Activated B cell treated with CpG ODN at 0.5 μM for 24 hours (primary cell): ENCODE measurements at regions of chr20 and their contacts with region 1.

Region 1: DNA sequence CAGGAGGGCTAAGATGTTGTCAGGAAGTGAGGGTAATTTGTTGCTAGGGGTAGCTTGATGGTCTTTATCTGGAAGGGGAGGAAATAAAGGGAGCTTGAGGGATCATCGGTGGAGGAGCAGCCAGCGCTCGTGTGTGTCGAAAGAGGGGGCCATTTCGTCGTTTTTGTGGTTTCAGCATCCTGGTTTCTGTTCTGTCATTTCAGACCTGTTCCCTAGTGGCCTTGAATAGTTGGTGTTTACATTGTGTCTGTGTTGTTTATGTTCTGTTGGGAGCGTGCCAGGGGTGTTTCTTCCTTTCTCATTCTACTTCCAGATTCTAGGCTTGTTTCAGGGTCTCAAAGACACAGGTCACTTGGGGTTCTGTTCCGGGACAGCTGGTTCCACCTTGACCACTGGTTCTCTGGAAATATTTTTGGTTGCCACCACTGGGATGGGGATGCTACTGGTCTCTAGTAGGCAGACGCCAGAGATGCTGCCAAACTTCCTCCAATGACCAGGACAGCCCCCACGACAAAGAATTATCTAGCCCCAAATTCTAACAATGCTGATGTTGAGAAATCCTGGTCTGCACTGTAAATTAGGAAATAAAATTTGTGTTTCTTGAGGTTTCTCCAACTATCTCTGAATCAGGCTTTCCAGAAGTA is 113.9 kb upstream of the NAA20 start:
- DNase-seq: no peak
- ATAC-seq: peak; percentile 93
- H3K4me3 Mint-ChIP-seq: no peak overlapping the region
- H3K27ac Mint-ChIP-seq: no peak overlapping the region
- H3K4me1 Mint-ChIP-seq: peaks cover 11% of the 10 kb centered on the region
- H3K27me3 Mint-ChIP-seq: peaks cover 13% of the 10 kb centered on the region
- CTCF ChIP-seq: no peak

Region 2: GRCh38 chr20:19784511-19785172 is 118.6 kb before region 1 on chr20:
- CTCF ChIA-PET with region 1: interaction called, 3 read pairs
- POLR2A ChIA-PET with region 1: no interaction called
- intact Hi-C with region 1: loop called (anchors 2 kb)
- DNase-seq: no peak
- ATAC-seq: peak; percentile 71
- H3K4me3 Mint-ChIP-seq: no peak overlapping the region
- H3K27ac Mint-ChIP-seq: no peak overlapping the region
- H3K4me1 Mint-ChIP-seq: peaks cover 22% of the 10 kb centered on the region
- H3K27me3 Mint-ChIP-seq: no peaks in the 10 kb centered on the region
- CTCF ChIP-seq: no peak

Region 3: GRCh38 chr20:19867940-19868371 is 35.3 kb before region 1 on chr20:
- CTCF ChIA-PET with region 1: no interaction called
- POLR2A ChIA-PET with region 1: no interaction called
- intact Hi-C with region 1: no loop called
- DNase-seq: no peak
- ATAC-seq: no peak
- H3K4me3 Mint-ChIP-seq: no peak overlapping the region
- H3K27ac Mint-ChIP-seq: no peak overlapping the region
- H3K4me1 Mint-ChIP-seq: no peaks in the 10 kb centered on the region
- H3K27me3 Mint-ChIP-seq: peaks cover 3% of the 10 kb centered on the region
- CTCF ChIP-seq: no peak